ENCODE measurements at regions of chr4 and their contacts with region 1.

Region 1: DNA sequence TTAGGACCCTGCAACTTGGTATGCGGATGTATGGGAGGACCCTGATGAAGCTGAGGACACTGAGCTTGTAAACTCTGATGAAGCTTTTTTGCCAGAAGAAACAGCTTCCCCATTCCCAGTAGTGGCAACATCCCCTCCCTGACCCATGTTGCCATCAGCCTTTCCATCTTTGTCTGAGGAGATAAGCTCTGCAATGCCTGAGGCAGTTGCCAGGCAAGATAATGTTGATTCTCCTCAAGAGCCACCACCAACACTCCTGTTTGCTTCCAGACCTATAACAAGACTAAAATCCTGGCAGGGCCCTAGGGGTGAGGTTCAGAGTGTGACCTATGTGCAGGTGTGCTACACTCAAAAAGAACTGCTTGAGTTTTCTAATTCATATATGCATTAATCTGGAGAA is 1168.7 kb downstream of the RAPGEF2 start:
- DNase-seq: no peak
- H3K4me3 ChIP-seq: no peak overlapping the region
- CTCF ChIP-seq: no peak

Region 2: GRCh38 chr4:160238790-160239189 is 32.8 kb before region 1 on chr4:
- in situ Hi-C with region 1: loop called (anchors 5 kb)
- DNase-seq: no peak
- H3K4me3 ChIP-seq: no peak overlapping the region
- CTCF ChIP-seq: no peak